MCF 10A (cell line): ENCODE measurements at regions of chr4 and their contacts with region 1.

Region 1: DNA sequence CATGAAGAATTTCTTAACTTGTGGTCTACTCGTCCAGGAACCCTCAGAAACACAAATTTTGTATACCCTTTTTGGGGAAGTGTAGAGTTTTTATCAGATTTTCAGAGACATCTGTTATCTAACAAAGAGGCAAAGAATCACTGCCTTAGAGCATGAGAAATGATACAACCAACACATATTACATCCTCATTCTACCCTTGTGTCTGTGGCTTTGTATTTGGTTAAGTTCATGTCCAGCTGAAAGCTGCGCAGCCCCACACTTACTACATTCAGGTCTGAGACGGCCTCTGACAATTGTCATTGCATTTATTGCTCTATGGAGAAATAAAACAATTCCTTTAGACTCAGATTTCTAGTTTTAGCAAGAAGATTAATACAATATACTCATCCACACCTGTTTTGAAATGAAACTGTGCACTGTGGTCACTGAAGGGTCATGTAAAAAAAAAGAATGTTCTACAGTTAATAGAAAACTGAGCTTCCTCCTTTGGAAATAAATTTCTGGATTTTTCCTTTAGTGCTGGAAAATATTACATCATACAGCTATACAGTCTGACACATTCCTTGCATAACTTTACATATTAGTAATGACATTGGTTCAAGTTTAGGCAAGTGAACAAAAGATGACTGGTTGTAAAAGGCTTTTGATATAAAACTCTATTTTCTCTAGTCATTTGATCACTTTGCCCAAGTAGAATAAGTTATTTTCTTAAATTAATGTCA is 39.8 kb downstream of the GLRB start:
- DNase-seq: peak; percentile 58
- H3K4me3 Mint-ChIP-seq: no peak overlapping the region
- H3K27ac Mint-ChIP-seq: peak overlapping the region; percentile 60
- H3K4me1 Mint-ChIP-seq: peaks cover 15% of the 10 kb centered on the region
- H3K27me3 Mint-ChIP-seq: no peaks in the 10 kb centered on the region
- CTCF ChIP-seq: no peak

Region 2: GRCh38 chr4:157075811-157076577 is 39.8 kb before region 1 on chr4 and contains the start of gene GLRB:
- CTCF ChIA-PET with region 1: interaction called, 3 read pairs
- POLR2A ChIA-PET with region 1: interaction called, 3 read pairs
- intact Hi-C with region 1: loop called (anchors 5 kb)
- DNase-seq: peak; percentile 39
- H3K4me3 Mint-ChIP-seq: peak within 1 kb of the TSS; percentile 91
- H3K27ac Mint-ChIP-seq: no peak within 1 kb of the TSS
- H3K4me1 Mint-ChIP-seq: peaks cover 8% of the 10 kb centered on the region
- H3K27me3 Mint-ChIP-seq: no peaks in the 10 kb centered on the region
- CTCF ChIP-seq: no peak
- total RNA-seq, gene GLRB: 5.9 and 7.1 TPM in 2 replicates